Activated CD4-positive, alpha-beta T cell treated with anti-CD3 and anti-CD28 coated beads, Interleukin-2, amount 10 ng/mL, durations not matched to agents 24 days and 14 days (primary cell): ENCODE measurements at regions of chr18 and their contacts with region 1.

Region 1: DNA sequence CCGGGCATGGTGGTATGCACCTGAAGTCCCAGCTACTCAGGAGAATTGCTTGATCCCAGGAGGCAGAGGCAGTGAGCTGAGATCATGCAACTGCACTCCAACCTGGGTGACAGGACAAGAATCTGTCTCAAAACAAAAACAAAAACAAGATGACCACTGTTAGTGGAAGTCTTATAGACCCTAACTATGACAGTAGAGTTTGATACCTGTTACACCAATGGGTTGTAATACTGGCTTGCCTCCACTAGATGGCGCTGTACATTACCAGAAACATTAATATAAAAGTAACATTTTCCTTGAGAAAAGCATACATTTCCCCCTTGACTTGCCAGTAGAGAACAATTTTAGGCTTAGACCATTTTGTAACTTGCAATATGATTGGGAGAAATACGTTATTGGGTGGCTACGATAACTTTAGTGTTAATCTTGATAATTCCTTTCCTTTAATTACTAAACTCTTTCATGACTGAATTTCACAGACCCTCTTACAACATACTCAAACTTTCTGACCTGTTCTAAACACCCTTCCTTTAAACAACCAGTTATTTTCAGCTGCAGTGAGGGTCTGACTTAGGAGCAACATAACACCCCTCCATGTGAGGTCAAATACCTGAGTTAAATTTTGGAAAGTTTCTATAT is 19.5 kb downstream of the SLC25A52 start:
- DNase-seq: peak; percentile 84
- H3K4me3 Mint-ChIP-seq: no peak overlapping the region
- H3K27ac Mint-ChIP-seq: no peak overlapping the region
- H3K4me1 Mint-ChIP-seq: no peaks in the 10 kb centered on the region
- H3K27me3 Mint-ChIP-seq: no peaks in the 10 kb centered on the region

Region 2: DNA sequence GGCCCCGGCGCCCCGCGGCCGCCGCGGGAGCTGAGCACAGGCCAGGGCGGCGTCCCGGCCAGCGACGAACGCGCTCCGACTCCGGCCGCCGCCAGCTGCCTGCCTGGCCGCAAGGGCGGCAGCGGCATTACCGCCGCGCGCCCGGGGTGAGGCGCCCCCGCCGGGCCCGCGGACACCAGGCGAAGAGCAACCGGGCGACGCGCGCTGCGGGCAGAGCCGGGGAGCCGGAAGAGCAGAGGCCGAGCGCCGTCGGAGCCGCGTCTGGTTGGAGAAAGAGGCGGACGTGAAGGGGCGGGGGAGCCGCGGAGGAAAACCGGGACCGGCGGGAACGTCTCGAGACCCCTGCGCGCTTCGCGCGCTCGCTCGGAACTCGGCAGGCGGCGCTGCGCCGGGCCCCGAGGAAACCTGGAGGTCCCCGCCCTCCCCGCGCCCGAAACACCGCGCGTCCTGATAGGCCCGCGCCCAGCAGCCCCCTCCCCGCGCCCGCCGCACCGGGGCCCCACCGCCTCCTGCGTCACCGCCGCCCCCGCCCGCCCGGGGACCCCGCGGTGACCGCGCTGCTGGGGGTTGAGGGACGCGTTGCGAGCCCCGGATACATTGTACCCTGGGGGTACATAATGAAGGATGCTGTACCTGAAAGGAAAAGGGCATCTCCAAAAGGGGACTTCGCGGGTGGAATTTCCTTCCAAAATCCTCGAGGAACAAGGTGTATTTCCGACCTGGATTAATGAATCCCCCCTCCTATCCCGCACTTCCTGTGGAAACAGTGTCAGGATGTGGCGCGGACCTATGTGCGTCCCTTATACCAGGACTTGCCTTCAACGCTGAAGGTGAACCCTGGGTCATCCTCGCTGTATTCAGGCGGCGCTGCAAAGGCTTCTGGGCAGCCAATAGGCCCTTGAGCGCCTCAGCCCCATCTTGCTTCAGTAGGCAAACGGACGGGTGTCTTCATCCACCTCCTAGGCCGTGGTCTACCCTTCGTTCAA is 55.8 kb before region 1 on chr18:
- intact Hi-C with region 1: no loop called
- DNase-seq: peak; percentile 85
- H3K4me3 Mint-ChIP-seq: peak overlapping the region; percentile 81
- H3K27ac Mint-ChIP-seq: peak overlapping the region; percentile 40
- H3K4me1 Mint-ChIP-seq: peaks cover 12% of the 10 kb centered on the region
- H3K27me3 Mint-ChIP-seq: peaks cover 51% of the 10 kb centered on the region

Region 3: GRCh38 chr18:31819106-31819924 is 78.1 kb after region 1 on chr18:
- intact Hi-C with region 1: loop called (anchors 1 kb)
- DNase-seq: peak; percentile 64
- H3K4me3 Mint-ChIP-seq: no peak overlapping the region
- H3K27ac Mint-ChIP-seq: no peak overlapping the region
- H3K4me1 Mint-ChIP-seq: no peaks in the 10 kb centered on the region
- H3K27me3 Mint-ChIP-seq: peaks cover 9% of the 10 kb centered on the region

Region 4: GRCh38 chr18:31830686-31831085 is 89.5 kb after region 1 on chr18:
- intact Hi-C with region 1: no loop called
- DNase-seq: no peak
- H3K4me3 Mint-ChIP-seq: no peak overlapping the region
- H3K27ac Mint-ChIP-seq: no peak overlapping the region
- H3K4me1 Mint-ChIP-seq: peaks cover 2% of the 10 kb centered on the region
- H3K27me3 Mint-ChIP-seq: no peaks in the 10 kb centered on the region

Region 5: GRCh38 chr18:31957728-31958127 is 216.5 kb after region 1 on chr18:
- intact Hi-C with region 1: loop called (anchors 1 kb)
- DNase-seq: no peak
- H3K4me3 Mint-ChIP-seq: no peak overlapping the region
- H3K27ac Mint-ChIP-seq: no peak overlapping the region
- H3K4me1 Mint-ChIP-seq: no peaks in the 10 kb centered on the region
- H3K27me3 Mint-ChIP-seq: no peaks in the 10 kb centered on the region

Region 6: DNA sequence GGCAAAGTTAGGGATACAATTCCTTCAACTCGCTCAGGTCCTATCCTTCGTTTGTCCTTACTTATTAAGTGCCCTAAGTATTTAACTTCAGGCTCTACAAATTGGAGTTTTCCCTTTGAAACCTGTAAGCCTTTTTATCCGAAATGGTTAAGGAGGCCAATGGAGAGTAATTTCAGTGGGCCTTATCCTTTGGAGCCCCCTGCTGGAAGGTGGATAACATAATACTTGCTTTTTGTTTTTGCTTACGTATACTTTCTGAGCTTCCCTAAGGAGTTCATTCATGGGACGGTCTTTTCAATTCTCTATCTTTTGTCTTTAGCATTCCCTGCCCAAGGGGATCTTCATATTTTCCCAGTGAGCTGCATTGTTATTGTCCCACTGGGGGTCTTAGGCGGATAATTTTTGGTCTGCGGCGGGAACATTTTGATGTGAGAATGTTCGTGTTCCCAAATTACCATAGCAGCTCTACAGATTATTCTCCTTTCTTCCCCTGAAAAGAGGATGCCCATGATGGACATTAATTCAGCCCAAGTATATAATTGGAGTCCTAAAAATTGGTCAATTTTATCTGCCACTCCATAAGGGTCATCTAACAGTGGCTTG is 236.2 kb after region 1 on chr18:
- intact Hi-C with region 1: loop called (anchors 1 kb)
- DNase-seq: peak; percentile 75
- H3K4me3 Mint-ChIP-seq: no peak overlapping the region
- H3K27ac Mint-ChIP-seq: no peak overlapping the region
- H3K4me1 Mint-ChIP-seq: peaks cover 2% of the 10 kb centered on the region
- H3K27me3 Mint-ChIP-seq: peaks cover 3% of the 10 kb centered on the region